Calu3 (cell line): ENCODE measurements at regions of chr9 and their contacts with region 1.

Region 1: GRCh38 chr9:97615439-97616072 is 17.6 kb downstream of the TSTD2 start:
- DNase-seq: peak; percentile 42
- H3K4me3 Mint-ChIP-seq: no peak overlapping the region
- H3K27ac Mint-ChIP-seq: no peak overlapping the region
- H3K4me1 Mint-ChIP-seq: no peaks in the 10 kb centered on the region
- H3K27me3 Mint-ChIP-seq: no peaks in the 10 kb centered on the region
- CTCF ChIP-seq: peak; percentile 32

Region 2: DNA sequence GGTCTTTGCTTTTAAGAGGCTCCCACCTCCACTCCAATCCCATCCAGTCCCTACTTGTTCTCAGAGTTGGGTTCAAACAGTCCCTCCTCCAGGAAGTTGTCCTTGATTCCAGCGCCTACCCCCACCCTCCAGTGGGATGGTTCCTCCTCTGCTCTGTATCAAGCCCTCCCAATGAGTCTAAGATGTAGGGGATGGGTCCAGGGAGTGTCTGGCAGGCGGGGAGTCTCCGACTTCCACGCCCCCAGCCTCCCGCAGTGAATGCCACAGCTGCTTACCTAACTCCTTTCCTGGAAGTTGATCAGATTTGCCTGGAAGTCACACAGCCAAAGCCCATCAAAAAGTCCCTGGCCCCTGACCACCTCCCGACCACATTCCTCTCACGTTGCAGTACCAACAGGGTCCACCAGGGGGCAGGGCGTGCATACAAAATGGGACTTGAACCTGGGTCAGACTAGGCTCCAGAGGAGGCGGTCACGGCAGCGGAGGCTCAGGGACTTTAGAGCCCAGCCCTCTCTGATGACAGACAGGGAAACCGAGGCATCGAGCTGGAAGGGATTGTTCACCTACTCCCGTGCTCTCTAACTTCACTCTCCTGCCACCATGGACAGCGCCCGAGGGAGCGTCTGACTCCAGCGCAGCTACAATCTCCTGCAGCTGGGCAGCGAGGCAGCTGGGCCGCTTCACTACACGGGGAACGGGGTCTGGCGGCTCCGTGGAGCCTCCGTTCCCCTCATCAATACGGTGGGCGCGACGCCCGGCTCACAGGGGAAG is 228.6 kb before region 1 on chr9:
- CTCF ChIA-PET with region 1: interaction called, 5 read pairs
- intact Hi-C with region 1: loop called (anchors 1 kb)
- DNase-seq: peak; percentile 71
- H3K4me3 Mint-ChIP-seq: no peak overlapping the region
- H3K27ac Mint-ChIP-seq: no peak overlapping the region
- H3K4me1 Mint-ChIP-seq: peaks cover 39% of the 10 kb centered on the region
- H3K27me3 Mint-ChIP-seq: no peaks in the 10 kb centered on the region
- CTCF ChIP-seq: peak; percentile 94

Region 3: DNA sequence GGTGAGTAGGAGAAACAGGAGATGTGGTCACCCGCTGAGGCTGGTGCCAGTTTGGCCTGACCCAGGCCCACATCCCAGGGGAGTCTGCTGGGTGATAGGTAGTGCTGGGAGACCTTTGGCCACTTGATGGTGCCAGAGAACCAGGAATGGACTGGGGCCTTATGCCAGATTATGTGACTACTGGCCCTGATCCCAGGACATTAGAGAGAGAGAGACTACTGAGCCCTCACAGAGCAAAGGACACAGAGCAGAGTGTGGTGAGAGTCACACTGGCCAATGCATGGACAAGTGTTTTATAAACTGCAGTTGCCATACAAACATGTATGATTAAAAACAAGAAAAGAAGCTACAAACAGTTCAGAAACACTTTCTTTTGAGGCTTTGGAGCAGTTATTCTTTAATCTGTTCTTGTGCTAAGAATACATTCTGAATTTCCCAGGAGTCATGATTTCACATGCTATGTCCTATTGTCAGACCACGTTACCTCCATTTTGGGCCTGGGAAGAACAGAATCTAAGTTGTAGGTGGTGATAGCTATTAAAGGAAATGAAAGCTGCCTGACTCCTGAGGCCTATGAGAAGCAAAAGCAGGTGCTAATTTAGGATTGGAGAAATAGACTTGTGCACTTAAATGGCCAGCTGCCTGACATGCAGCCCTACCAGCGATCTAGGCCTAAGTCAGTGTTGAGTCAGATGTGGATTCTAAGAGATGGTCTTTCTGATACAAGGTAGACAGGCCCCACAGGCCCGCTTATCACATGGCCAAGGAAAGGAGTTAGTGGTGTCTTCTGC is 146.7 kb before region 1 on chr9:
- CTCF ChIA-PET with region 1: interaction called, 5 read pairs
- intact Hi-C with region 1: loop called (anchors 5 kb)
- DNase-seq: peak; percentile 23
- H3K4me3 Mint-ChIP-seq: no peak overlapping the region
- H3K27ac Mint-ChIP-seq: no peak overlapping the region
- H3K4me1 Mint-ChIP-seq: no peaks in the 10 kb centered on the region
- H3K27me3 Mint-ChIP-seq: no peaks in the 10 kb centered on the region
- CTCF ChIP-seq: no peak

Region 4: DNA sequence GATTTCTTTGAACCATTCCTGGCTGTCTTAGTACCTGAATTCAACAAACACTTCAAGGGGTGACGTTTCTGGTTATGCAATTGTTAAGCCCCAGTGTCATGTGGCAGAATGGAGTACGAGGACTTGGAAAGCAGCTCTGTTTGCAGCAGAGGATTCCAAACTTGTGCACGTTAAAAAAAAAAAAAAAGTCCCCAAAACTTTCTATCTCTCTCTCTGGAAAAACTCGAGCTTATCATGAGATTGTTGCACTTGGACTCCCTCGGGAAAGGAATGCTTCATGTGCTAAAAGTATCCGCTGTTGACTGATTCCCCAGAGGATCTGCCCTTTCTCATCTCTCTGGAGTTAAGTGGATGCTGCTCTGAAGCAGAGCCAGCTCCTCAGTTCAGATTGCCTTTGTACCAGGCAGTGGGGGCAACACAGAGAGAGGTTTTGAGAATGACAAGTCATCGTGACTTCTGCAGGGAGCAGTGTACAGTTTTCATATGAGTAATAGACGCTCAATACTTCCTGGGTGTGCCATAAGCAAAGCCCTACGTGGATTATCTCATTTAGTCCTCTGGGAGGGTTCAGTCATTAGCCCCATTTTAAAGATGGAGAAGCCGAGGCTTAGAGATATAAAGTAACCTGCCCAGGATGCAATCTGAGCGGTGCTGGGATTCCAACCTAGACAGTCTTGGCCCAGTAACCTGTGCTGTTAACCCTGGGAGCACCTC is 86.0 kb before region 1 on chr9:
- CTCF ChIA-PET with region 1: interaction called, 10 read pairs
- intact Hi-C with region 1: no loop called
- DNase-seq: no peak
- H3K4me3 Mint-ChIP-seq: no peak overlapping the region
- H3K27ac Mint-ChIP-seq: no peak overlapping the region
- H3K4me1 Mint-ChIP-seq: no peaks in the 10 kb centered on the region
- H3K27me3 Mint-ChIP-seq: peaks cover 5% of the 10 kb centered on the region
- CTCF ChIP-seq: no peak